GM13976 (cell line): ENCODE measurements at regions of chr1 and their contacts with region 1.

Region 1: GRCh38 chr1:27192039-27192529 is 37.2 kb upstream of the SLC9A1 start:
- DNase-seq: no peak
- CTCF ChIP-seq: no peak

Region 2: DNA sequence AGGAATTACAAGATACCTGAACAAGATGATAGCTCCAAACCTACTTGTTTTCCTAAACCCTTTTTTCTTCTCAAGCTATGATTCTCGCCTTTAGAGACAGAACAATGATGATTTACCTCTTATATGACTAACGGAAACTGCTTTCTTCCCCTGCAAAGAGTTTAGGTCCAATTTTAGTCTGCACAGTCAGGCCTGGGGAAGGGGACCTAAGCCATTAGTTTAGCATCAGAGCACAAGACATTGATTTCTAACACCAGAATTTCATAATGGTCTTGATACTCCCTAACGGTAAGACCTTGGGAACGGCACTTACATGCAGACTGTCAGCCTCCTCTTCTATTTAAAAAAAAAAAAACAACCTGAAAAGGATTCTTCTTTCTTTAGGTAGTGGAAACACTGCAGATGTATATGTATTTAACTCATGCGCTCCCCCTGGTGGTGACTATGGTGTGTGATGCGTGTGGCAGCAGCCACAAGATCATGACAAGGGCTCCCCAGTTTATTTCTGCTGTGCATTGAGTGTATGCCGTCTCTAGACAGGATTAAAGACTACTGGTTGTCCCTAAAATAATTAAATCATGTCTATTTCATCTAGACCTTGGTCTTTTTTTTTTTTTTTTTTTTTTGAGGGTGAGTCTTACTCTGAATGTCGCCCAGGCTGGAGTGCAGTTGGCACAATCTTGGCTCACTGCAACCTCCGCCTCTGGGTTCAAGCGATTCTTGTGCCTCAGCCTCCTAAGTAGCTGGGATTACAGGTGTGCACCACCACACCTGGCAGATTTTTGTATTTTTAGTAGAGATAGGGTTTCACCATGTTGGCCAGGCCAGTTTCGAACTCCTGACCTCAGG is 92.6 kb after region 1 on chr1:
- in situ Hi-C with region 1: loop called (anchors 25 kb)
- DNase-seq: peak; percentile 89
- CTCF ChIP-seq: peak; percentile 87

Region 3: GRCh38 chr1:27341525-27342252 is 149.6 kb after region 1 on chr1 and contains the start of gene SYTL1:
- in situ Hi-C with region 1: no loop called
- DNase-seq: peak; percentile 86
- CTCF ChIP-seq: no peak